Activated naive CD8-positive, alpha-beta T cell treated with anti-CD3 and anti-CD28 coated beads, Interleukin-2, amount 10 ng/mL, durations not matched to agents 7 days and 5 days (primary cell): ENCODE measurements at regions of chr1 and their contacts with region 1.

Region 1: DNA sequence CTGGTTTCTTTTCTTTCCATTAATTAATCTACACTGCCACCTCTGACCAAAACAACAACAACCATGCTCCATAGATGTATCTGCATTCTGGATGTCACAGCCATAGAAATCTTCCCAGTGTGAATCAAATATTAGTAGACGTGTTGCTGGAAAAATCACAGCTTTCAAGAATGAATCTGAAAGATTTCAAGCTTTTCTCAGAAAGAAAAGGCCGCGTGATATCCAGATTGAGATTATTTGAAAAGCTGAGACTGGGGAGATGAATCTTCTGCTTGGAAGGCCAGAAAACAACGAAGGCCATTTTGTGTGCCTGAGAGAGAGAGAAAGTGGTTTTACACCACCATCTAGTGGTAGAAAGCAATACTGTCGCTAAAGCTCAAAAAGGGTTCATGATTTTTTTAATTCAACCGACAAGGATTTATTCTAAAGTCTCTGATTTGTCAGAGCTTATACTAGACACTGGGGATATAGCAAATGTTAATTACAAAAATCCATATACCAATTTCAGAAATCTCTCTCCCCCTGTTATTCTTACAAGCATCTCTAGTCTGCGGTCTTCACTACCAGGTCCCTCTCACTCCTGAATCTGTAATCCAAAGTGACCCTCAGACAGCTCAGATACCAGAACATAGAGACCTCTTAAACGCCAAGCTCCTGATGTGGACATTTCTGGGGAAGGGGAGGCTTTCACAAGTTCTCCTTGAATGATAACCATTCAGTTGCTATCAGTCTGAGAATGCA is 87.5 kb upstream of the SGIP1 start:
- DNase-seq: no peak
- ATAC-seq: peak; percentile 37
- H3K4me3 Mint-ChIP-seq: peak overlapping the region; percentile 87
- H3K27ac Mint-ChIP-seq: peak overlapping the region; percentile 96
- H3K4me1 Mint-ChIP-seq: peaks cover 26% of the 10 kb centered on the region
- H3K27me3 Mint-ChIP-seq: peaks cover 12% of the 10 kb centered on the region

Region 2: DNA sequence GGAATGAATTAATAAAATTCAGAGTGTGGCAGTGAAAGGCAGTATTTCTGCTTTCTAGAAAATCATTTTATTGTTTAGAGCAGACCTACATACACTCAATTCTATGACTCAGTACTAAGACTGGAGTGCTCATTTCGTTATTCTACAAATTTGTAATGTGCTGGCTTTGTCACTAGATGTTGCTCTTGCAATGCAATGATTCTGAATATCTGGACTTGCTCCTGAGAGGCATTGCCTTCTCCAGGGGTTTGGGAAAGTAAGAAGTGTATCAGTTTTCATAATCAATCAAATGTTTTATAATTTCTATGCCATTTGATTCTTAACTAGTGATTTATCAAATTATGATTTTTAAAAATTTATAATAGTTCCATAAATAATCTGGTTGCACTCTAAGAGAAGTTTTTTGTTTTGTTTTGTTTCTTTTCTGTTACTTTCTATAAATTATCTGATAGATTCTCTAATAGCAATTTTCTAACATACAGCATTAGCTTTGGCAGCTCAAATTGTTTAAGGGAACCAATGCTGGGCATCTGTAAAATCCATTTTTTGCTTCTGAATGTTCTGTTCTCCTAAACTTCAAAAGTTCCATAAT is 193.0 kb before region 1 on chr1:
- POLR2A ChIA-PET with region 1: interaction called, 21 read pairs
- DNase-seq: no peak
- ATAC-seq: peak; percentile 79
- H3K4me3 Mint-ChIP-seq: no peak overlapping the region
- H3K27ac Mint-ChIP-seq: no peak overlapping the region
- H3K4me1 Mint-ChIP-seq: peaks cover 29% of the 10 kb centered on the region
- H3K27me3 Mint-ChIP-seq: no peaks in the 10 kb centered on the region

Region 3: DNA sequence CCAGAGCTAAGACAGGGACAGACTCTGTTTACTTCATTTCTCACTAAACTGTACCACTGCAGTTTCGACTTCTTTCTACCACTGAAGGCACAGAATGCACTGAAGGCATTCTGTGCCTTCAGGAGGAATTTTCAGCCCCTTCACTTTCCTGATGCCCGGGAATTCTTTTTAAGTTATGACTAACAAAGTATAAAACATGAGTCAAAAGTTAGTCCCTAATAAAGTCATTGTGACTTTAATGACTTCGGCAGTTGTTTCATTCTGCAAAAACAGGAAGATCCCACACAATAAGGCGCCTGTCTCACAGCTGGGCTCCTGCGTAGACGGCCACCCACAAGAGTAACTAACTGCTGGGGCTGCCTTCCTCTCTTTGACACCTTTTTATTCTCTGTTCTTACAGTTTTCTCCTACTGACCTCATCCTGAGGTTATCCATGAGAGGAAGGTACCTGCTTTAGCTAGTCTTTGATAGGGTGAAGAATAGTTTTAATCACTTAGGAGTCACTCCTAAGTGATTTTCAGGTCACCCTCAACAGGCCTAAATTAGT is 96.4 kb before region 1 on chr1:
- POLR2A ChIA-PET with region 1: interaction called, 11 read pairs
- DNase-seq: no peak
- ATAC-seq: peak; percentile 67
- H3K4me3 Mint-ChIP-seq: peak overlapping the region; percentile 83
- H3K27ac Mint-ChIP-seq: peak overlapping the region; percentile 91
- H3K4me1 Mint-ChIP-seq: peaks cover 78% of the 10 kb centered on the region
- H3K27me3 Mint-ChIP-seq: no peaks in the 10 kb centered on the region